ENCODE measurements at regions of chr3 and their contacts with region 1.

Region 1: DNA sequence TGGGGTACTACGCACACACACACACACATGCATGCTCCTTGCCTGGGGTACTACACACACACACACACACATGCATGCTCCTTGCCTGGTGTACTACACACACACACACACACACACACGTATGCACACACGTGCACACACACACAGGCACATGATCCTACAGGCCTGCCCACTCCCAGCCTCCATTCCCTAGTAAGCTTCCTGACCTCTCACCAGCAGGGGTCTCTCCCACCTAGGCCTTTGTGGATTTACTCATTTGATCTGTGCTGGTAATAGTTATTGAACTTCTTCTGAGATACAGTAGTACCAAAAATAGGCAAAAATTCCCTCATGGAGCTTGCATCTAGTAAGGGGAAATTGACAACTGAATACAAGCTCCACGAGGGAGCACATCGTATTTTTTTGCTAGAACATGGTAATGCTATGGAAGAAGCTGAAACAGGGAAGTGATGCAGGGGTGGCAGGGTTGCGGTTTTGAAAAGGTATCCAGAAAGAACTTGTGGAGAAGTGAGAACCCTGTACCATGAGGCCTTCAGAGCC is 19.1 kb downstream of the TTC21A start:
- DNase-seq: peak in 1 of 2 experiments; percentile 29
- H3K4me3 ChIP-seq: no peak overlapping the region
- H3K27ac ChIP-seq: peak overlapping the region; percentile 68
- H3K4me1 ChIP-seq: peaks cover 41% of the 10 kb centered on the region
- H3K27me3 ChIP-seq: no peaks in the 10 kb centered on the region
- CTCF ChIP-seq: peak; percentile 53

Region 2: GRCh38 chr3:39107388-39108199 is 19.0 kb before region 1 on chr3 and contains the starts of genes GORASP1 and TTC21A:
- CTCF ChIA-PET with region 1: interaction called, 6 read pairs
- POLR2A ChIA-PET with region 1: no interaction called
- intact Hi-C with region 1: loop called (anchors 1 kb)
- DNase-seq: peak; percentile 64 to 71
- H3K4me3 ChIP-seq: peak within 1 kb of the TSS; percentile 95
- H3K27ac ChIP-seq: no peak within 1 kb of the TSS
- H3K4me1 ChIP-seq: peaks cover 16% of the 10 kb centered on the region
- H3K27me3 ChIP-seq: no peaks in the 10 kb centered on the region
- CTCF ChIP-seq: no peak
- total RNA-seq, gene GORASP1: 43.4 and 44.4 TPM in 2 replicates
- total RNA-seq, gene TTC21A: 9.0 and 9.5 TPM in 2 replicates

Region 3: DNA sequence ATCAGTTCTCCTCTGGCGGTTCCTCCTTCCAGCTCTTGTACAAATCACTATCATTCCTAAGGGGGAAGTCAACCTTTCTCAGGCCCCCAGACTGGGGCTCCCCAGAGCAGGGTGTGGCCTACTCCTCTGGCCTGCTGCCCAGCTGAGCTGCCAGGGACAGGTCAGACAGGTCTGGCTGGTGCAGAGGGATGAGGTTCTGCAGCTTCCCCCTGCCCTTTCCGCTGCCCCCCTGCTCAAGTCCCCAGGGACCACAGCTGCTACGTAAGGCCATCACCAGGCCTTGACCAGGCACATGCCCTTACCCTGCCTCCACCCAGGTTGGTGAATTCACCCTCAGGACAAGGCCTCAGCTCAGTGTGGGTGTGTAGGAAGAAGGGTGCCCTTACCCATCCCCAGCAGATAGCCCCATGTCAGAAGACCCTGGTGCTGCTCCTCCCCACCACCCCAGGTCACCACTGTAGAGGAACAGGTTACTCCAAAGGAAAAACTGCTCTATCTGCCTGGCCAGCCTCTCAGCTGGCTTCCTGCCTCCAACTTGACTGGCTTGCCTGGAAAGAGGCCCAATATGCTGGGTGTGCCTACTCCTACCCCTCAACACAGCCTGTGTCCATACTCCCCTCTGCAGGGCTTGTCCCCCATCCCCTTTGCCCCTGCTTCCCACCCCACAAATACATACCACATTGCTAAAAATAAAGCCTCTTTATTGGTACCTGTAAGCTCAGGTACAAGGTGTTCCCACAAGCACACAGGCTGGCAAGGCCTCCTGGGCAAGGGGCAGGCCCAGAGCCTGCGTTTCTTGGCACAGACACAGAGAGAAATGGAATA is 14.8 kb after region 1 on chr3:
- CTCF ChIA-PET with region 1: no interaction called
- POLR2A ChIA-PET with region 1: interaction called, 3 read pairs
- intact Hi-C with region 1: loop called (anchors 1 kb)
- DNase-seq: peak; percentile 92 to 97
- H3K4me3 ChIP-seq: no peak overlapping the region; the same call in 1 of the 2 replicates
- H3K27ac ChIP-seq: peak overlapping the region; percentile 77
- H3K4me1 ChIP-seq: peaks cover 52% of the 10 kb centered on the region
- H3K27me3 ChIP-seq: no peaks in the 10 kb centered on the region
- CTCF ChIP-seq: no peak

Region 4: DNA sequence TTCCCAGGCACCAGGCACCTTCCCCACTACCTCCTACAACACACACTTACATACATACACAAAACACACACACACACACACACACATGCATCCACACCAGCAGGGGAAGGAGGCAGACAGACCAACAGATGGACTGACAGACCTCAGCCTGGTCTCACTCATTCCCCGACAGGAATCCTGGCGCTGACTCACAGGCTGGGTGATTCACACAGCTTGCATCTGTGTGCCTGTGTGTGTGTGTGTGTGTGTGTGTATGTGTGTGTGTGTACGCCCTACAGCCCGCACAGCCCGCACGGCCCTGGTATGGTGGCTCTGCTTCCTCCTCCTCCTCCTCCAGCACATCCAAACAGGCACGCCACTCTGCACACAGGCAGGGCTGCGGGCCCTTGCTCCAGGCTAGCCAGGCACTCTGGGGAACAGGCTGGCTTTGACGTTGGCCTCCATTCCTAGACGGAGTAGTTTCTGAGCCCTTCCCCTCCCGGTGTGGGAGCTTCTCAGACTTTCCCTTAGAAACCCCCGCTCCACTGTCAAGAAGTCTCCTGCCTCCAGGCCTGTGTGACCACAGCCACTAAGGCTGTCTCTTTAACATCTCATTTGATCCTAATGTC is 20.5 kb after region 1 on chr3:
- CTCF ChIA-PET with region 1: interaction called, 6 read pairs
- POLR2A ChIA-PET with region 1: interaction called, 3 read pairs
- intact Hi-C with region 1: loop called (anchors 1 kb)
- DNase-seq: peak; percentile 85 to 88
- H3K4me3 ChIP-seq: peak overlapping the region; percentile 40; the same call in 1 of the 2 replicates
- H3K27ac ChIP-seq: peak overlapping the region; percentile 65
- H3K4me1 ChIP-seq: peaks cover 83% of the 10 kb centered on the region
- H3K27me3 ChIP-seq: no peaks in the 10 kb centered on the region
- CTCF ChIP-seq: no peak

Region 5: DNA sequence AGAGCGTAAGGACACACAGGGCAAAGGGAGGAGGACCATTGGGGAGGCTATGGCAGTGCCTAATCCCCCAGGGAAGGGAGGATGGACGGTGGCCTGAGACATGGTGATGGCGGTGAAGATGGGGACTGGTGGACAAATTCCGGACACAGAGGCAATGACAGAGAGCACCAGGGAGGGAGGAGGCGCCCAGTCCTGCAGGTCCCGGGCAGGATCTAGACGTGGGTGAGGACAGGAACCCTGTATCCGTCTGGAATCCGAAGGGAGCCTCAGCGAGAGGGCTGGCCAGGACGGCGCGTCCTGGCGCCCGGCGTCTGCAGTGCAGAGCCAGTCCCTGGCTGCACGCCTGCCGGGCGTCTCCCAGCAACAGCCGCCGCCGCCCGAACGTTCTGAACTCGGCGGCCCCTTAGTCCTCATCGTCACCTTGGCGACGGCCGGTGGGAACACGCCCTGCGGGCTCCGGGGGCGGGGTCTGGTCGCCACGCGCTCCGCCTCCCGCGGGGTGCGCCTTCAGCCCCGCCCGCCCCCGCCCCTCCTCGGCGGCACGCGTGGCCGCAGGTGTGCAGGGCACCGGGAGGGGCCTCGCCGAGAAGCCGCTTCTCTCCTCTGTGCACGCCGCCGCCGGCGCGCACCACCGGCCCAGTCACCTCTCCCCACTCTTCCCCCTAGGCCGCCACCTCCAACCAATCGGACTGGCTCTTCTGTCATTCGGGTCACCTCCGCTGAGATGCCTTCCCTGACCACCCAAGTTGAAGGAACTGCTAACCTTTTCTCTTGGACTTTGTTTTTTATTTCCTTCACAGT is 54.1 kb after region 1 on chr3:
- CTCF ChIA-PET with region 1: interaction called, 9 read pairs
- POLR2A ChIA-PET with region 1: interaction called, 6 read pairs
- intact Hi-C with region 1: loop called (anchors 1 kb)
- DNase-seq: peak; percentile 75 to 95
- H3K4me3 ChIP-seq: peak overlapping the region; percentile 57
- H3K27ac ChIP-seq: no peak overlapping the region
- H3K4me1 ChIP-seq: peaks cover 37% of the 10 kb centered on the region
- H3K27me3 ChIP-seq: no peaks in the 10 kb centered on the region
- CTCF ChIP-seq: no peak

Region 6: DNA sequence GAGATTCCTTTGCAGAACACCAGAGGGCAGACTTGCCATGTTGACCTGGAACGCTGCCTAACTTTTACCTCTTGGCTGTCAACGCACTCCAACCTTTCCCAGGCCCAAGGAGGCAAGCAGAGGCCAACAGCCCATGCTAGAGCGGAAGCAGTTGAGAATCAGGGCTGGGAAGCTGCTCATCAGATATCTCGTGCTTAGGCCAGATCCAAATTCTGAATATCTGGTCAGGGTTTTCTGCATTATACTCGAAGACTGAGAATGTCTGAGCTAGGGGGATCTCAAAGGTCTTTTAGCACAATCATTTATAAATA is 63.3 kb after region 1 on chr3:
- CTCF ChIA-PET with region 1: interaction called, 5 read pairs
- POLR2A ChIA-PET with region 1: interaction called, 3 read pairs
- intact Hi-C with region 1: loop called (anchors 1 kb)
- DNase-seq: peak; percentile 47 to 51
- H3K4me3 ChIP-seq: no peak overlapping the region
- H3K27ac ChIP-seq: no peak overlapping the region
- H3K4me1 ChIP-seq: no peaks in the 10 kb centered on the region
- H3K27me3 ChIP-seq: no peaks in the 10 kb centered on the region
- CTCF ChIP-seq: peak; percentile 77

Measured in PC-9 (cell line).